ENCODE measurements at regions of chr1 and their contacts with region 1.

Region 1: GRCh38 chr1:155261852-155262673 is at the start of gene SCAMP3:
- DNase-seq: peak; percentile 88
- H3K4me3 Mint-ChIP-seq: peak within 1 kb of the TSS; percentile 90
- H3K27ac Mint-ChIP-seq: peak within 1 kb of the TSS; percentile 88
- H3K4me1 Mint-ChIP-seq: peaks cover 38% of the 10 kb centered on the region
- H3K27me3 Mint-ChIP-seq: no peaks in the 10 kb centered on the region
- total RNA-seq, gene SCAMP3: 147 and 168 TPM in 2 replicates

Region 2: GRCh38 chr1:155193275-155193990 is 68.6 kb before region 1 on chr1:
- intact Hi-C with region 1: loop called (anchors 1 kb)
- DNase-seq: peak; percentile 72
- H3K4me3 Mint-ChIP-seq: peak overlapping the region; percentile 88
- H3K27ac Mint-ChIP-seq: peak overlapping the region; percentile 97
- H3K4me1 Mint-ChIP-seq: peaks cover 39% of the 10 kb centered on the region
- H3K27me3 Mint-ChIP-seq: no peaks in the 10 kb centered on the region

Region 3: DNA sequence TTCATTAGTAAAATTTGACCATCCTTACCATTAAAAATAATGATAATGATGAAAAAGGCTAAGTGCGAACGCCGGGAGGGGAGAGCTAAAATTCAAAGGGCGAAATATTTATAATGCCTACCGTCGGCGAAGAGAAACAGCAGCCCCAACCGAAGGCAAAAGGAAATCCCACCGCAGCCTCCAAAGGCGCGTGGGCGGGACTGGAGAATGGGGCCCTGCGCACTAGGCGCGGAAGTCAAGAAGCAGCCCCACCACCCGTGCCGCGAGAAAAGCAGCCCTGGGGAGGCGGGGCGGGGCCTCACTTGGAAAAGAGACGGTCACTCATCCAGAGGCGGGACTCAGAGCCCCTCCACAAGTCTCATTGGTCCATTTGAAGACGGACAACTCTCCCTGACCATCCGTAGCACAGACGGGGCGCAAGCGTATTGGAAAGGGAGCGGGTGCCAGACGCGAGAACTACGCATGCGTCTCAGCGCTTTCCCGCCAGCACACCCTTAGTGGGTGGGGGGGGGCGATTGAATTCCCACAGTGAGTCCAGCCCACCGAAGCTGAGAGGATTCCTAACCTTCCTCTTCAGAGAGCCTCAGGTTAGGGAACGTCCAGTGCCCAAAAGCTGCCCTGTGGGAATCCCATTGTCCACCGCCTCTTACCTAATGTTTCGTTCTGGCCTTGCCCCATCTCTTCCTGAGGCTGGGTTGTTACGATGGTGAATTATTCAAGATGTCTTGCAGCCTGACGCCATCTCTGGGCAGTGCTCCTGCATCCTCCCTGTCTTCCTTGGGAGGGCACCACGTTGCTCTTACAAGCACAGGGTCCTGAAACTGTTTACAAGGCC is 34.6 kb before region 1 on chr1:
- intact Hi-C with region 1: loop called (anchors 1 kb)
- DNase-seq: peak; percentile 98
- H3K4me3 Mint-ChIP-seq: peak overlapping the region; percentile 95
- H3K27ac Mint-ChIP-seq: peak overlapping the region; percentile 92
- H3K4me1 Mint-ChIP-seq: peaks cover 15% of the 10 kb centered on the region
- H3K27me3 Mint-ChIP-seq: no peaks in the 10 kb centered on the region

Region 4: GRCh38 chr1:155250633-155251449 is 11.2 kb before region 1 on chr1:
- intact Hi-C with region 1: loop called (anchors 1 kb)
- DNase-seq: peak; percentile 92
- H3K4me3 Mint-ChIP-seq: peak overlapping the region; percentile 12
- H3K27ac Mint-ChIP-seq: no peak overlapping the region
- H3K4me1 Mint-ChIP-seq: peaks cover 32% of the 10 kb centered on the region
- H3K27me3 Mint-ChIP-seq: no peaks in the 10 kb centered on the region

Region 5: GRCh38 chr1:155308493-155309422 is 46.7 kb after region 1 on chr1 and contains the start of gene FDPS:
- intact Hi-C with region 1: loop called (anchors 1 kb)
- DNase-seq: peak; percentile 98
- H3K4me3 Mint-ChIP-seq: peak within 1 kb of the TSS; percentile 92
- H3K27ac Mint-ChIP-seq: peak within 1 kb of the TSS; percentile 93
- H3K4me1 Mint-ChIP-seq: peaks cover 38% of the 10 kb centered on the region
- H3K27me3 Mint-ChIP-seq: no peaks in the 10 kb centered on the region
- total RNA-seq, gene FDPS: 274 and 289 TPM in 2 replicates

Region 6: DNA sequence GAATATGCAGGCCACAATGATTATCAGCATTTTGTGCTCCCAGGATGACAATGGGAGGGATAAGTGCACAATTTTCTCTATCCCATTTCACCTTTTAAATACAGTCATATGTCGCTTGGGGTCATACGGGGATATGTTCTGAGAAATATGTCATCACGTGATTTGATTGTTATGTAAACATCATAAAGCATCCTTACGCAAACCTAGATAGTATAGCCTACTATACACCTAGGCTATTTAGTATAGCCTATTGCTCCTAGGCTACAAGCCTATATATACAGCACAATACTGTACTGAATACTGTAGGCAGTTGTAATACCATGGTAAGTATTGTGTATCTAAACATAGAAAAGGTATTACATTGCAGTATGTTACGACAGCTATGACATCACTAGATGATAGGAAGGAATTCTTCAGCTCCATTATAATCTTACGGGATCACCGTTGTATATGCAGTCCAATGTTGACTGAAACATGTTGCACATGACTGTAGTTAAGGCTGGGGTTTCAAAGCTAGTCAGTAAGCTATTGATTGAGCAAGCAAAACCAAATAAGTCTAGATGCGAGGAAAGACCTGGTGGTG is 77.5 kb after region 1 on chr1:
- intact Hi-C with region 1: no loop called
- DNase-seq: no peak
- H3K4me3 Mint-ChIP-seq: no peak overlapping the region
- H3K27ac Mint-ChIP-seq: peak overlapping the region; percentile 45
- H3K4me1 Mint-ChIP-seq: no peaks in the 10 kb centered on the region
- H3K27me3 Mint-ChIP-seq: no peaks in the 10 kb centered on the region

Region 7: DNA sequence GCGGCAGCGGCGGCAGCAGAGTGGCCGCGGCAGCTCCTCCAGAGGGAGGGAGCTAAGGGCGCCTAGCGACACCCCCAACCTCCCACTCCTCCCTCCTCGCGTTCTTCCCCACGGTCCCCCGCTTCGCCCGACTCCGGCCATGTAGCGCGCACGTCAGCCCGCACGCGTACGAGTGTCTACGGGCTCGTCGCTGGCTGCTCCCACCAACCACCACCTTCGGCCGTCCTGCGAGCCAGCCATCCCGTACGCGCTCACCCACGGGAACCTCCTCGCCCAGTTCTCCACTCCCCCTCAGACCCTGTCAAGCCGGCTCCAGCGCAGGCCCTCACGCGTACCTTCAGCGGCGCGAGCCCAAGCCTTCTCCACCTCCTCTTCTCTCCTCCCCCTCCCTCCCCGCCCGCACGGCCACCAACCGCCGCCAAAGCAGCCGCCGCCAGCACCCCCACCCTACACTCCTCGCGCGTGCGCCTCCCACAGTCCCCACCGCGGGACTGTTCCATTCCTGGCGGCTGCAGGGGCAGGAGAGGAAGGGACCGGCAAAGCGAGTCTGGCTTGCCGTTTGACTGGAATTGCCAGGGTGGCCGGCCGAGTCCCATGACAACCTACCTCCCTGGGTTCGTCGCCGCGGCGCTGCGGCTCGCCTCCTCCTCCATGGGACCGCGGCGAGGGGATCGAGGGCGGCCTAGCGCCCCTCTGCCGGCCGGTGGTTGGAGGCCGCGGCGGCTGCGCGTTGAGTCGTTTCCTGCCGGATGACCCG is 426.4 kb after region 1 on chr1 and contains the start of gene YY1AP1:
- intact Hi-C with region 1: loop called (anchors 5 kb)
- DNase-seq: peak; percentile 88
- H3K4me3 Mint-ChIP-seq: peak within 1 kb of the TSS; percentile 95
- H3K27ac Mint-ChIP-seq: peak within 1 kb of the TSS; percentile 96
- H3K4me1 Mint-ChIP-seq: peaks cover 62% of the 10 kb centered on the region
- H3K27me3 Mint-ChIP-seq: peaks cover 3% of the 10 kb centered on the region
- total RNA-seq, gene YY1AP1: 62.2 and 64.4 TPM in 2 replicates